SK-N-SH (cell line): ENCODE measurements at regions of chr16 and their contacts with region 1.

Region 1: GRCh38 chr16:30032083-30032819 is 1.2 kb upstream of the TLCD3B start:
- DNase-seq: peak; percentile 83
- H3K4me3 ChIP-seq: no peak overlapping the region; a peak in 1 of 4 replicates
- H3K27ac ChIP-seq: peak overlapping the region in 1 of 2 experiments; percentile 83; a peak in 1 of 4 replicates
- H3K4me1 ChIP-seq: peaks cover 6 to 28% of the 10 kb centered on the region in 2 experiments; a peak in 2 of 4 replicates
- H3K27me3 ChIP-seq: no peaks in the 10 kb centered on the region
- CTCF ChIP-seq: peak; percentile 90
- EP300 ChIP-seq: no peak
- RAD21 ChIP-seq: peak; percentile 92

Region 2: GRCh38 chr16:29805378-29806098 is 226.7 kb before region 1 on chr16:
- CTCF ChIA-PET with region 1: interaction called, 23 read pairs
- POLR2A ChIA-PET with region 1: interaction called, 3 read pairs
- DNase-seq: peak; percentile 96
- H3K4me3 ChIP-seq: peak overlapping the region; percentile 60 to 88
- H3K27ac ChIP-seq: peak overlapping the region; percentile 89 to 93
- H3K4me1 ChIP-seq: peaks cover 20 to 38% of the 10 kb centered on the region in 2 experiments
- H3K27me3 ChIP-seq: no peaks in the 10 kb centered on the region
- CTCF ChIP-seq: no peak
- EP300 ChIP-seq: peak in 1 of 2 experiments; percentile 78; a peak in 1 of 4 replicates
- RAD21 ChIP-seq: no peak

Region 3: GRCh38 chr16:29926005-29926710 is 106.1 kb before region 1 on chr16 and contains the start of gene KCTD13:
- CTCF ChIA-PET with region 1: interaction called, 10 read pairs
- POLR2A ChIA-PET with region 1: interaction called, 4 read pairs
- DNase-seq: peak; percentile 99
- H3K4me3 ChIP-seq: peak within 1 kb of the TSS; percentile 73 to 76
- H3K27ac ChIP-seq: peak within 1 kb of the TSS; percentile 81 to 87
- H3K4me1 ChIP-seq: peaks cover 15% of the 10 kb centered on the region in 2 experiments; a peak in 3 of 4 replicates
- H3K27me3 ChIP-seq: no peaks in the 10 kb centered on the region
- CTCF ChIP-seq: no peak
- EP300 ChIP-seq: no peak; a peak in 1 of 4 replicates
- RAD21 ChIP-seq: no peak; the same call in 1 of the 2 replicates
- polyA plus RNA-seq, gene KCTD13: 28.5 and 31.0 TPM in 2 replicates

Region 4: GRCh38 chr16:29995911-29996772 is 36.1 kb before region 1 on chr16 and contains the start of gene INO80E:
- CTCF ChIA-PET with region 1: interaction called, 11 read pairs
- POLR2A ChIA-PET with region 1: no interaction called
- DNase-seq: peak; percentile 99
- H3K4me3 ChIP-seq: peak within 1 kb of the TSS; percentile 87 to 92
- H3K27ac ChIP-seq: peak within 1 kb of the TSS; percentile 94
- H3K4me1 ChIP-seq: peaks cover 0 to 14% of the 10 kb centered on the region in 2 experiments; a peak in 1 of 4 replicates
- H3K27me3 ChIP-seq: no peaks in the 10 kb centered on the region
- CTCF ChIP-seq: no peak
- EP300 ChIP-seq: no peak
- RAD21 ChIP-seq: no peak
- polyA plus RNA-seq, gene INO80E: 43.9 and 46.6 TPM in 2 replicates

Region 5: DNA sequence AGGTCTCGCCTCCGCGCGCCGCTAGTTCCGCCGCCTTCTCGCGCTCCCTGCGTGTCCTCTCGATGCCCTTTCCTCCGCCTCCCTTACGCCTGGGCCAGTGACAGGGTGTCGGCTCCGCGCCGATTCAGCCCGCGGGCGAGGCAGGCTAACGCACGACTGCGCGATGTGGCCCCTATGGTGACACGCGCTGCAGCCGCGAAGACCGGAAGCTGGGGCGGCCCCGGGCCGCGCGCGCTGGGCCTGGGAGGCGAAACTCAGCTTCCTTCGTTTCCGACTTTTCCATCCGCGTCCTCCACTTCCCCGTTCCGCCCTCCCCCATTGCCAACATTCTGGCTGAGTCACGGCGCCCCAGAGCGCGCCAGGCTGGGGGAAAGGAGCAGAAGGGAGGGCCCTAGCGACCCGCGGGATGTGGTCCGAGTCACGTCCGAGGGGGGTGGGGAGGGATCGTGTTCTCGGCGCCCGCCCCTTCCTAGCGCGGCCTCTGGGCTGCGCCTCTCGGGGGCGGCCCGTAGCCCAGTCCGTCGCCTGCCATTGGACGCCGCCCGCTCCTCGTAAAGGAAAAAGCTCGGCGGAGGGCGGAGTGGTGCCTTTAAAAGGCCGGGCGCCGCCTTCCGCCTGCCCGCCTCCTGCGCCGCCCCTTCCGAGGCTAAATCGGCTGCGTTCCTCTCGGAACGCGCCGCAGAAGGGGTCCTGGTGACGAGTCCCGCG is 33.0 kb after region 1 on chr16 and contains the start of gene ALDOA:
- CTCF ChIA-PET with region 1: interaction called, 14 read pairs
- POLR2A ChIA-PET with region 1: interaction called, 12 read pairs
- DNase-seq: peak; percentile 96
- H3K4me3 ChIP-seq: peak within 1 kb of the TSS; percentile 92 to 98
- H3K27ac ChIP-seq: peak within 1 kb of the TSS; percentile 98 to 99
- H3K4me1 ChIP-seq: peaks cover 39 to 45% of the 10 kb centered on the region in 2 experiments
- H3K27me3 ChIP-seq: no peaks in the 10 kb centered on the region
- CTCF ChIP-seq: no peak
- EP300 ChIP-seq: peak; percentile 28 to 62; a peak in 2 of 4 replicates
- RAD21 ChIP-seq: no peak
- polyA plus RNA-seq, gene ALDOA: 437 and 641 TPM in 2 replicates

Region 6: GRCh38 chr16:30142672-30143346 is 110.6 kb after region 1 on chr16:
- CTCF ChIA-PET with region 1: no interaction called
- POLR2A ChIA-PET with region 1: no interaction called
- DNase-seq: no peak
- H3K4me3 ChIP-seq: no peak overlapping the region
- H3K27ac ChIP-seq: no peak overlapping the region
- H3K4me1 ChIP-seq: peaks cover 0 to 3% of the 10 kb centered on the region in 2 experiments; a peak in 1 of 4 replicates
- H3K27me3 ChIP-seq: no peaks in the 10 kb centered on the region
- CTCF ChIP-seq: no peak
- EP300 ChIP-seq: no peak
- RAD21 ChIP-seq: peak; percentile 50